ENCODE measurements at regions of chr3 and their contacts with region 1.

Region 1: GRCh38 chr3:81302045-81302444 is 459.4 kb downstream of the GBE1 start:
- DNase-seq: peak; percentile 50 to 59
- H3K4me3 ChIP-seq: no peak overlapping the region
- H3K4me3 Mint-ChIP-seq: no peak overlapping the region
- H3K27ac Mint-ChIP-seq: no peak overlapping the region
- H3K4me1 ChIP-seq: peaks cover 30% of the 10 kb centered on the region
- H3K4me1 Mint-ChIP-seq: peaks cover 29% of the 10 kb centered on the region
- H3K27me3 ChIP-seq: no peaks in the 10 kb centered on the region
- H3K27me3 Mint-ChIP-seq: no peaks in the 10 kb centered on the region
- CTCF ChIP-seq: peak; percentile 68 to 79

Region 2: DNA sequence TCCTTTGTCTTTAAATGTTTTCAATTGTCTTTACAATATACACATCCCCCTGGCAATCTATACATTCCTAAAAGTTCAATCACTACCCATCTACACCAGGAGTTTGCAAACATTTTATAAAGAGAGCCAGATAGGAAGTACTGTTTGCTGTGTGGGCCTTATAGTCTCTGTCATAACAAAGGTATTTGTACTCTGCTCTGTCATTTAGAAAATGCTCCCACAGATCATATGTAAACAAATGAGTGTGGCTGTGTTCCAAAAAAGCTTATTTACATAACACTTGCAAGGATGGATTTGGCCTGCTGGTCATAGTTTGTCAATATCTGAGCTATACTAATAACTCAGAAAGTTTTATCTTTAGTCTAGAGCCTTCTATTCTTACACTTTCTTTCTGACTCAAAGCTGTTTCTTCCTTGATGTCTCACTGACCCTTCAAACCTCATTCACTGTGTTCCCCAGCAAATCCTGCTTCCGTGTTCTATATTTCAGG is 52.5 kb before region 1 on chr3:
- CTCF ChIA-PET with region 1: interaction called, 4 read pairs
- POLR2A ChIA-PET with region 1: no interaction called
- intact Hi-C with region 1: loop called (anchors 1 kb)
- DNase-seq: peak; percentile 34 to 67
- H3K4me3 ChIP-seq: no peak overlapping the region
- H3K4me3 Mint-ChIP-seq: peak overlapping the region; percentile 34
- H3K27ac Mint-ChIP-seq: peak overlapping the region; percentile 90
- H3K4me1 ChIP-seq: peaks cover 48% of the 10 kb centered on the region
- H3K4me1 Mint-ChIP-seq: peaks cover 33% of the 10 kb centered on the region
- H3K27me3 ChIP-seq: no peaks in the 10 kb centered on the region
- H3K27me3 Mint-ChIP-seq: no peaks in the 10 kb centered on the region
- CTCF ChIP-seq: no peak

Region 3: GRCh38 chr3:81338676-81339555 is 36.9 kb after region 1 on chr3:
- CTCF ChIA-PET with region 1: interaction called, 3 read pairs
- POLR2A ChIA-PET with region 1: no interaction called
- intact Hi-C with region 1: loop called (anchors 1 kb)
- DNase-seq: peak in 1 of 2 experiments; percentile 24
- H3K4me3 ChIP-seq: no peak overlapping the region
- H3K4me3 Mint-ChIP-seq: no peak overlapping the region
- H3K27ac Mint-ChIP-seq: no peak overlapping the region
- H3K4me1 ChIP-seq: peaks cover 11% of the 10 kb centered on the region
- H3K4me1 Mint-ChIP-seq: peaks cover 7% of the 10 kb centered on the region
- H3K27me3 ChIP-seq: no peaks in the 10 kb centered on the region
- H3K27me3 Mint-ChIP-seq: no peaks in the 10 kb centered on the region
- CTCF ChIP-seq: peak; percentile 49 to 65

Region 4: DNA sequence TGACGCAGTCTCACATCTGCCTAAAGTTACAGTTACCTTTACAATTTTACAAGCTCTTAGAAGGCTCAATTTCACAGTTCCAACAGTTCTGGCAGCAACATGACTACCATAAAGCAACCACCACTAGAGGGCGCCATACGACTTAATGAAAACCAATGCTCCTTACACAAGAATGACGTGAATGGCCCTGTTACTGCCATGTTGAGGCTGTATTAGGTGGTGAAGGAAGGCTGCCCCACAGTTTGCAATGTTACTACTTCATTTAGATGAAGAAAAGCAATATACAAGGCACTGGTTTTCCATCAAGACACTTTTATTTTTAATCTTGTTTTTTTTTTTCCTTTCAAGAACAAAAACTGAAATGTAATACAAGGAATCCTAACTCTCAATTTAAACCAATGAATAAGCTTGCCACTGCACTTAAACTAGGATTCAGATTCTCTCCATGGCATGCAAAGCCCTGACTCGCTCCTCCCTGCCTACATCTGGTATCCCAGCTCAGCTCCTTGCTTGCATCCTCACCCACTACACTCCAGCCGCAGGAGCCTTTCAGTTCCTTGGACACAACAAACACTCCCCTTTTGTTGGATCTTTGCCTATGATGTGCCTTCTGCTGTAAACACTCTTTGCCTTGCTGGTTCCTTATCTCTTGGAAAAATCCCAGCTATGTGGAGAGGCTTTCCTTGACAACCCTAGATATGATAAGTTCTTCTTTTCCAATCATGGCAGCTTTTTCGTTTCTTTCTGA is 188.7 kb after region 1 on chr3:
- CTCF ChIA-PET with region 1: no interaction called
- POLR2A ChIA-PET with region 1: no interaction called
- intact Hi-C with region 1: loop called (anchors 2 kb)
- DNase-seq: peak; percentile 85
- H3K4me3 ChIP-seq: no peak overlapping the region
- H3K4me3 Mint-ChIP-seq: peak overlapping the region; percentile 69
- H3K27ac Mint-ChIP-seq: peak overlapping the region; percentile 94
- H3K4me1 ChIP-seq: peaks cover 11% of the 10 kb centered on the region
- H3K4me1 Mint-ChIP-seq: peaks cover 9% of the 10 kb centered on the region
- H3K27me3 ChIP-seq: no peaks in the 10 kb centered on the region
- H3K27me3 Mint-ChIP-seq: no peaks in the 10 kb centered on the region
- CTCF ChIP-seq: peak; percentile 74 to 75

Region 5: GRCh38 chr3:81643721-81644120 is 341.7 kb after region 1 on chr3:
- CTCF ChIA-PET with region 1: no interaction called
- POLR2A ChIA-PET with region 1: no interaction called
- intact Hi-C with region 1: loop called (anchors 2 kb)
- DNase-seq: peak; percentile 28 to 33
- H3K4me3 ChIP-seq: no peak overlapping the region
- H3K4me3 Mint-ChIP-seq: no peak overlapping the region
- H3K27ac Mint-ChIP-seq: no peak overlapping the region
- H3K4me1 ChIP-seq: no peaks in the 10 kb centered on the region
- H3K4me1 Mint-ChIP-seq: no peaks in the 10 kb centered on the region
- H3K27me3 ChIP-seq: no peaks in the 10 kb centered on the region
- H3K27me3 Mint-ChIP-seq: no peaks in the 10 kb centered on the region
- CTCF ChIP-seq: peak; percentile 37 to 39

Measured in Caco-2 (cell line).